ENCODE measurements at regions of chr3 and their contacts with region 1.

Region 1: DNA sequence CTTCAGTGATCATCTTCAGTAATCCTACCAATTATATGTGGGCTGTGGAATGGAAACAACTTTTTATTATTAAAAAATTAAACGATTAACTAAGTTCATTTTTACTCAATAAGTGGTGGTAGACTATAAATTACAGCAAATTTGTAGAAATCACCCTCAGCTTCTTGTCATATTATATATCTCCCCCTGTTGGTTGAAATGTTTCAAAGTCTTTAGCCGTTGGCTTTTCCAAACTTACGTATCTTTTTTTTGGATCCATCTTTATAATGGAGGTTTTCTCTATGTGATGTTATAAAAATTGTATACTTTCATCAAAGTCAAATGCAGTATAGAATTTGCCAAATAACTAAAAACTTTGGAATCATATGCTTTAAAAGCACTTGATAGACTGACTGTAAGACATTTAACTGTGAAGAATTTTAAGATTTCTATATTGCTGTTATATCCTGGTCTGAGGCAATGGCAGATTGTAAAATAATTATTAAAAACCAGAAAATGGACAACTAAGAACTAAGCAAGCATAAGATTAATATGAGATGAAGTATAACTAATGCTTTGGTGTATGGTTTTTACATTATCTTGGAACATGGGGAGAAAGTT is 44.7 kb downstream of the ATP11B start:
- DNase-seq: no peak
- H3K4me3 Mint-ChIP-seq: no peak overlapping the region
- H3K27ac Mint-ChIP-seq: no peak overlapping the region
- H3K4me1 Mint-ChIP-seq: no peaks in the 10 kb centered on the region
- H3K27me3 Mint-ChIP-seq: no peaks in the 10 kb centered on the region

Region 2: GRCh38 chr3:182713743-182714517 is 124.0 kb before region 1 on chr3:
- CTCF ChIA-PET with region 1: interaction called, 23 read pairs
- POLR2A ChIA-PET with region 1: no interaction called
- DNase-seq: no peak
- H3K4me3 Mint-ChIP-seq: no peak overlapping the region
- H3K27ac Mint-ChIP-seq: no peak overlapping the region
- H3K4me1 Mint-ChIP-seq: peaks cover 8% of the 10 kb centered on the region
- H3K27me3 Mint-ChIP-seq: no peaks in the 10 kb centered on the region

Region 3: GRCh38 chr3:183710231-183710630 is 872.3 kb after region 1 on chr3:
- CTCF ChIA-PET with region 1: no interaction called
- POLR2A ChIA-PET with region 1: no interaction called
- DNase-seq: no peak
- H3K4me3 Mint-ChIP-seq: no peak overlapping the region
- H3K27ac Mint-ChIP-seq: no peak overlapping the region
- H3K4me1 Mint-ChIP-seq: peaks cover 5% of the 10 kb centered on the region
- H3K27me3 Mint-ChIP-seq: no peaks in the 10 kb centered on the region